A549 (cell line): ENCODE measurements at regions of chr19 and their contacts with region 1.

Region 1: DNA sequence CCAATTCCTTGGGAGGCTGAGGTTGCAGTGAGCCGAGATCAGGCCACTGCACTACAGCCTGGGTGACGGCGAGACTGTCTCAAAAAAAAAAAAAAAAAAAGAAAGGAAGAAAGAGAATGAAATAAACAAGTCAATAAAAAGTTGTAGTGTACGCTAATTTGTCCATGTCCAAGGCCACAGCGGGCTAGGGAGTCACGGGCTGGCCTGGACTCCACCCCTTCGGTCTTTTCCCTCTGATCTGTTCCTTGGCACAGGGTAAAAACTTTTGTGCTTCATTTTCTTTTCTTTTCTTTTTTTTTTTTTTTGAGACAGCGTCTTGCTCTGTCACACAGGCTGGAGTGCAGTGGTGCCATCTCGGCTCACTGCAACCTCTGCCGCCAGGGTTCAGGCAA is 19.4 kb upstream of the MKNK2 start:
- DNase-seq: no peak
- ATAC-seq: no peak
- H3K4me3 ChIP-seq: no peak overlapping the region
- H3K27ac ChIP-seq: no peak overlapping the region
- H3K4me1 ChIP-seq: 0 out of 3 replicates have a peak, but pooled peaks cover 3% of the 10 kb centered on the region
- CTCF ChIP-seq: no peak
- EP300 ChIP-seq: no peak
- POLR2A ChIP-seq: no peak
- RAD21 ChIP-seq: no peak

Region 2: DNA sequence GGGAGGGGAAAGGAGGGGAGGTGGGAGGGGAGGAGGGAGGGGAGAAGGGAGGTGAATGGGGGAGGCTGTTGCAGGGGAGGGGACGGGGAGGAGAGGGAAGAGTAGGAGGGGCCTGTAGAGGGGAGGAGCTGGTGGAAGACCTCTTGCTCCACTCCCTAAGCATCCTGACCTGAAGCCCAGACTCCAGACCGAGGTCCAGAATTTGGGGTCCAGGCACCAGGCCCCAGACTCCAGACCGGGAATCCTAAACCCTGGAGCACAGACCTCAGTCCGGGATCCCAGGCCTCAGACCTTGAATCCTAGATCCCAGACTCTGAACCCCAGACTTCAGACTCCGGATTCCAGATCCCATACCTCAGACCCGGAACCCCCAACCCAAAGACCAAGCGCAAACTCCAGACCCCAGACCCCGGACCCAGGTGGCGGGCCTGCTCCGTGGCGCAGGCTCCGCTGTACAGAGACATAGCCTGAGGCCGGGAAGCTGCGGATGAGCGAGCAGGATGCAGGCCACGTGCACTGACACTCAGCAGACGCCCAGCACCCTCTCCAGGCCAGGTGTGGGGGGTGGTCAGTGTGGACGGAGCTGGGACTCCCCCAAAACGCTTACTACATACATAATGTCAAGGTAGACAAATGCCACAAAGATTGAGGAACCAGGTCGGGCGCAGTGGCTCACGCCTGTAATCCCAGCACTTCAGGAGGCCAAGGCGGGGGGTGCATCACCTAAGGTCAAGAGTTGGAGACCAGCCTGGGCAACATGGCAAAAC is 54.2 kb before region 1 on chr19:
- CTCF ChIA-PET with region 1: interaction called, 45 read pairs
- POLR2A ChIA-PET with region 1: no interaction called
- DNase-seq: peak; percentile 68 to 88
- ATAC-seq: peak; percentile 63 to 76
- H3K4me3 ChIP-seq: peak overlapping the region; percentile 26; the same call in 1 of the 3 replicates
- H3K27ac ChIP-seq: peak overlapping the region; percentile 88 to 100
- H3K4me1 ChIP-seq: peaks cover 13% of the 10 kb centered on the region
- CTCF ChIP-seq: no peak
- EP300 ChIP-seq: no peak
- POLR2A ChIP-seq: no peak
- RAD21 ChIP-seq: no peak

Region 3: DNA sequence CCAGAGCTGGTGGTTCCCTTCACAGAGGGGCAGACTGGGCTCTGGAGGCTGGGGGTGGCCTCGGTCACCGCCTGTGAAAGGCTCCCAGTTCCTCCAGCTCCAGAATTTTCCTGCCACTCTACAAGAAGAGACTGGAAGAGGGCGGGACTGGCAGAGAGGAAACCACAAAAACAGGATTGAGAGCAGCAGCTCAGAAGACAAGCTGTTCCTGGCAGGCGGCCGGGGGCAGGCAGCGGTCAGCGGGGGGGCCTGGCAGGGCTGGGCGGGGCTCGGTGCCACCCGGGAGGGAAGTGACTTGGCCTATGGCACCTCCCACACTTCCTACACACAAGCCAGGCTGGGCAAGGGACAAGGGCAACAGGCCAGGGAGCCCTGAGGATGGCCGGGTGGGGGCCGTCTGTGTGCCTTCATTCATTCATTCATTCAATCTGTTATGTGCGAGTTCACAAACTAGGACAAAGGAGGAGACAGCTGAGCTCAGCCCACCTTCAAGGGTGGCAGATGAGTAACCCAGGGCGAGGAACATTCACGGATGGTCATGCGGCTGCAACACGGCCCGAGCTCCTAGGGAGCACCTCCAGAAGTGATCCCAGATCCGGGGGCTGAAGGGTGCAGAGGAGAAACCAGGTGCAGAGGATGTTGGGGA is 38.0 kb before region 1 on chr19:
- CTCF ChIA-PET with region 1: interaction called, 30 read pairs
- POLR2A ChIA-PET with region 1: no interaction called
- DNase-seq: peak; percentile 59 to 88
- ATAC-seq: peak; percentile 86 to 88
- H3K4me3 ChIP-seq: peak overlapping the region; percentile 29
- H3K27ac ChIP-seq: peak overlapping the region; percentile 91 to 93
- H3K4me1 ChIP-seq: peaks cover 29% of the 10 kb centered on the region
- CTCF ChIP-seq: no peak
- EP300 ChIP-seq: no peak
- POLR2A ChIP-seq: peak; percentile 38; the same call in 1 of the 2 replicates
- RAD21 ChIP-seq: no peak

Region 4: DNA sequence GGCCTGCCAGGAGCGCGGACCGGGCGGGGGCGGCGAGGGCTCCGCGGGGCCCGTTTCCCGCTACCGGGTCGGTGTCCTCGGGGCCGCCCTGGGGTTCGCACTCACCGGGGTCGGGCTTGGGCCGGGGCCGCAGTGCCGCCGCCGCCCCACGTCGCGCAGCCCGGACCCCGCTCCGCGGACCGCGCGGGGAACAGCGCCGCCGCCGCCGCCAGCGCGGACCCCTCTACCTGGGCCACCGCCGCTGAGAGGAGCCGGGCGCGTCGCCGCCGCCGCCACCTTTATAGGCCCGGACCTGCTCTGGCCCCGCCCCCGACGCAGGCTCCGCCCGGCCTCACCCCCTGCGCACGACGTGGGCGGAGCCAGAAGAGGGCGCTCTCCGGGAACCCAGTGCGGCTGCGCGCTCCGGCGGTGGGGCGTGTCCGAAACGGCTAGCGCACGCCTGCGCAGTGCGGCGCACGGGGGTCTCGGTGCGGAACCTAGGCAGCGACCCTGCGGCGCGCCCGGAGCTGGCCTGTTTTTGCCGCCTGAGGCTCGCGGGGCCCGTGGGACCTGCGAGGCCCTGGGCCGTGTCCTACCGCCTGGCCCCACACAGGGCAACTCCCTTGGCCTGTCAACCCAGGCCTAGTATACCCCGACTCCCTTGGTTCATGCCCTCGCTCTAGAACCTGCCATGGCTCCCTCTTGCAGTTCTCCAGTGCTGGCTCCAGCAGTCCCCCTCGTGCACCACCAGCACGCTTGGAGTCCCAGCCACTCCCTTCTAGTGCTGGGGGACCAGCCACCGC is 19.2 kb before region 1 on chr19 and contains the start of gene MKNK2:
- CTCF ChIA-PET with region 1: interaction called, 24 read pairs
- POLR2A ChIA-PET with region 1: no interaction called
- DNase-seq: peak; percentile 41 to 79
- ATAC-seq: peak; percentile 51 to 69
- H3K4me3 ChIP-seq: peak within 1 kb of the TSS; percentile 99
- H3K27ac ChIP-seq: peak within 1 kb of the TSS; percentile 95 to 100
- H3K4me1 ChIP-seq: peaks cover 61% of the 10 kb centered on the region
- CTCF ChIP-seq: peak; percentile 23; the same call in 2 of the 3 replicates
- EP300 ChIP-seq: no peak
- POLR2A ChIP-seq: peak; percentile 98
- RAD21 ChIP-seq: no peak
- polyA plus RNA-seq, gene MKNK2: 56.7 and 58.4 TPM in 2 replicates

Region 5: DNA sequence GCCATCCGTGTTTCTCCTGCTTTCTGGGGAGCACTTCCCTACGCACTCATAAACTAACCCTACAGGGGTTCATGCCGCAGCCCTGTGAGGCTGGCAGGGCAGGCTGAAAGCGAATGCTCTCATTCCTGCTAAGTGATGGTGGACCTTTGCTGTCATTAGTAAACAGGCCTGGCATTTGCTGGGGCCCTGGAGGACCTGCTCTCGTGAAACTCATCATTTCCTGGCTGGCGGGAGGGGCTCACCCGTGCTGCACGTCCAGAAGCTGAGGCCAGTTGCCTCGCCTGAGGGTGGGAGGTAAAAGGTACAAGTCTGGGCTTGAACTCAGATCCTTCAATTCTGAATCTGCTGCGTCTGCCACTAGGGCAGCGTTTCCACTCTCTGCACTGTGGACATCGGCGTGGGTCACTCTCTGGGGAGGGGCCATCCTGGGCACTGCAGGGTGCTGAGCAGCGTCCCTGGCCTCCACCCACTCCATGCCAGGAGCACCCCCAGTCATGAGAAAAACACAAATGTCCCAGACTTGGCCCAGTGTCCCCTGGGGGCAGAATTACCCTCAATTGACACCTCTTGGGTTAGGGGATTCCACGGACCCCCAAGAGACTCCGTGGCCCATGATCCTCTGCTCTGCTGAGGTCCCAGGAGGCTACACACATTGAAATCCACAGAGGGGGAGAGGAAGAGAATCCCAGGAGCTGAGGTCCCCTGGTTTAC is 18.7 kb after region 1 on chr19:
- CTCF ChIA-PET with region 1: interaction called, 15 read pairs
- POLR2A ChIA-PET with region 1: no interaction called
- DNase-seq: no peak
- ATAC-seq: no peak
- H3K4me3 ChIP-seq: no peak overlapping the region
- H3K27ac ChIP-seq: peak overlapping the region in 1 of 2 experiments; percentile 40; a peak in 2 of 6 replicates
- H3K4me1 ChIP-seq: peaks cover 8% of the 10 kb centered on the region; the same call in 2 of the 3 replicates
- CTCF ChIP-seq: no peak
- EP300 ChIP-seq: no peak
- POLR2A ChIP-seq: no peak
- RAD21 ChIP-seq: no peak